Activated CD4-positive, alpha-beta T cell treated with anti-CD3 and anti-CD28 coated beads, Interleukin-2, amount 10 ng/mL, durations not matched to agents 24 days and 14 days (primary cell): ENCODE measurements at regions of chr10 and their contacts with region 1.

Region 1: DNA sequence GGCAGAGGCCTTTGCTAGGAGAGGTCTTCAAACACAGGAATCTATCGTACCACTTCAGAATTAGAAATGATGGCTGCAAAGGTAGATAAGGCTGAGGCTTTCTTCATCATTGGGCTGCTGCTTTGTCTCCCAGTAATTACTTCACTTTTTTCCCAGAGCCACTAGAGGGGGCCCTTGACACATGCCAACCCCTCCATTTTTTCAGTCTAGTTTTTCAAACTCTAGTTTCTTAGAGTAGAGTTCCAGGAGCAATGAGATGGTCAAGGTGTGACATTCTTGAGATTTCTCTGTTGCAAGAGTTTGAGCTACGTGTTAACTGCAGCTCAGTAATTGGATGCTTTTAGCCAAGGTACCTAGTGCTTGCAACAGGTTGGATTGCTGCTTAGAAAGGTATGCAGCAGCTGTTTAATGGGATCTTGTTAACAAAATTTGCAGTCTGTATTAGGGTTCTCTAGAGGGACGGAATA is 33.8 kb upstream of the RBM20 start:
- DNase-seq: peak; percentile 87
- H3K4me3 Mint-ChIP-seq: no peak overlapping the region
- H3K27ac Mint-ChIP-seq: no peak overlapping the region
- H3K4me1 Mint-ChIP-seq: peaks cover 39% of the 10 kb centered on the region
- H3K27me3 Mint-ChIP-seq: peaks cover 3% of the 10 kb centered on the region

Region 2: GRCh38 chr10:110643653-110644597 is 33.6 kb after region 1 on chr10 and contains the start of gene RBM20:
- intact Hi-C with region 1: no loop called
- DNase-seq: peak; percentile 70
- H3K4me3 Mint-ChIP-seq: peak within 1 kb of the TSS; percentile 86
- H3K27ac Mint-ChIP-seq: peak within 1 kb of the TSS; percentile 28
- H3K4me1 Mint-ChIP-seq: peaks cover 15% of the 10 kb centered on the region
- H3K27me3 Mint-ChIP-seq: peaks cover 71% of the 10 kb centered on the region
- total RNA-seq, gene RBM20: 0.05 TPM in 1 of 2 replicates, not detected in the other

Region 3: DNA sequence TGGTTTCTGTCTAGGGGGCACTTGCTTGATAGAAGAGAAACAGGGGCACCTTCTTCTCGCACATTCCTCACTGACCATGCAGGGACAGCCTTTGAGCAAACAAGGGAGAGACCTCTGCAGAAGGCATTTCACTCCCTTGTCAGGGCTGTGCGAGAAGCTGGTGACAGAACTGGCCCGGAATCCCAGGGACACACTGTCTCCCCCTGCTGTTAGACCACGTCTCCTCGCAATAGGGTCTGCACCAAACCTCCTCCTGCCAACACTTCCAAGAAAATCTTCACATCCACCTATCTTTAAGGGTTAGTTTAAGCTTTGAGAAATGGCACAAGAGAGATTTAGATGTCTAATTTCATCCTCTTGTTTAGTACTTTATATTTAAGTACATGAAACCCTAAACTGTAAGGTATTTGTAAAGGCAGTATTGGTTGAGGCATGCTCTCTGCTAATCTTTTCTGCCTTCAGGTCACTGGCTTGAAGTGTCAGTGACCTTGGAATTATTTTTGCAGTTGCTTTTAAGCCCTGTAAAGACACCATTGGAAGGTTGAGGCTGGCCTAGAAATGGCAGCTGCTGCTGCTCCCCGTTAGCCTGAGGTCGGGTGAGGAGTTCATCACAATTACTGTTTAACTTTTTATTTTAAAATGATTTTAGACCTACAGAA is 70.8 kb after region 1 on chr10:
- intact Hi-C with region 1: loop called (anchors 1 kb)
- DNase-seq: peak; percentile 73
- H3K4me3 Mint-ChIP-seq: no peak overlapping the region
- H3K27ac Mint-ChIP-seq: no peak overlapping the region
- H3K4me1 Mint-ChIP-seq: peaks cover 3% of the 10 kb centered on the region
- H3K27me3 Mint-ChIP-seq: peaks cover 52% of the 10 kb centered on the region

Region 4: GRCh38 chr10:110746254-110746826 is 136.0 kb after region 1 on chr10:
- intact Hi-C with region 1: loop called (anchors 5 kb)
- DNase-seq: peak; percentile 84
- H3K4me3 Mint-ChIP-seq: no peak overlapping the region
- H3K27ac Mint-ChIP-seq: no peak overlapping the region
- H3K4me1 Mint-ChIP-seq: peaks cover 43% of the 10 kb centered on the region
- H3K27me3 Mint-ChIP-seq: no peaks in the 10 kb centered on the region

Region 5: GRCh38 chr10:111207500-111207899 is 597.2 kb after region 1 on chr10:
- intact Hi-C with region 1: loop called (anchors 5 kb)
- DNase-seq: peak; percentile 68
- H3K4me3 Mint-ChIP-seq: no peak overlapping the region
- H3K27ac Mint-ChIP-seq: no peak overlapping the region
- H3K4me1 Mint-ChIP-seq: no peaks in the 10 kb centered on the region
- H3K27me3 Mint-ChIP-seq: peaks cover 3% of the 10 kb centered on the region

Region 6: DNA sequence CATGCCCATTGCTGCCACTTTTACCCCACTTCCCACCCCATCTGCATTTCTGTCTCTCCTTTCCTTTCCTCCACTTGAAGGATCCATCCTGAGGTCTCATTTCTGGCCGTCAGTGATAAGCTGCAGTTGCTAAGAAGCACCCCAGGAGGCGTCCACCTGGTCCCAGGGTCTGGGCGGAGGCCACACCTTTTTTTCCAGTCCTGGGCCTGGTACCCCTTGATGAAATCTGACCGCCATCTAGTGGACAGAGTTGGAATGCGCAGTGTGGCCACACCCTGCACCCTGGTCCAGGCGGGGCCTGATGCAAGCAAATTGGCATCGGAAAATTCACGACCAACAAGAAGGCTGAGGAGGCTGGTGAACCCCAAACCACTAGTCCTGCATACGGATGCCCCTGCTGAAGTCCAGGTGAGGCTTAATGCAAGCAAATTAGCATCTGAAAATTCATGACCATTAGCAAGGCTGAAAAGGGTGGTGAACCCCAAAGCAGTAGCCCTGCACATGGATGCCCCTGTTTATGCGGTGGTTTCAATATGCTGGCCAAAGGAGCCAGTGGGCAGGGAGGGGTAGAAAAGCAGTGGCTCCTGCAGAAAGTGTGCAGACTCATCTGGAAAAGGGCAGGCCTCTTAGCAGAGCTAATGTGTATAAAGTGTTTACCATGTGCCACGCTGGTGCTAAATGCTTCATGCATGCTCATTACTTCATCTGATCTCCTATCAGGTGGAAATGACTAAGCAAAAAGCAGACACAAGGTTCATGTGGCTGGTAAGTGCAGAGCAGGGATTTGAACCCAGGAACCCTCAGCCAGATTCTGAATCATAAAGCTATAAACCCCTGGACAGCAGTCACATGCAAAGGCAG is 1530.0 kb after region 1 on chr10:
- intact Hi-C with region 1: loop called (anchors 5 kb)
- DNase-seq: peak; percentile 92
- H3K4me3 Mint-ChIP-seq: no peak overlapping the region
- H3K27ac Mint-ChIP-seq: no peak overlapping the region
- H3K4me1 Mint-ChIP-seq: peaks cover 3% of the 10 kb centered on the region
- H3K27me3 Mint-ChIP-seq: peaks cover 4% of the 10 kb centered on the region